ENCODE measurements at regions of chr13 and their contacts with region 1.

Region 1: DNA sequence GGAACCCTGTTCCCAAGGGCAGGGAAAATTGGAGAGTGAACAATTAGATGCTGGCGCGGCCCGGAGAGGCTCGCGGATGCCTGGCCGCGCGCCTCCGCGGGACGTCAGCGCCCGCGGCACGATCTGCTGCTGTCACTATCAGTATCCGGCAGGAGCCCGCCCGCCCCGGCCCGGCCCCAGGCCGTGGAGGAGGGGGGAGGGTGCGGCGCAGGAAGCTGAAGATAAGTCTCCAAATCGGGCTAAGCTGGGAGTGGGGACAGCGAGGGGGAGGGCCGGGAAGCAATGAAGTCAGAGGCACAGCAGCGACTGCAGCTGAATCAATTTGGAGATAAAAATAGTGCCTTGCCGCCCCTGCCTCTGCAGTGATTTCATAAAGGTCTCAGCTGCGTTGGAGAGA is 441.5 kb upstream of the KLF12 start:
- DNase-seq: peak; percentile 88 to 95
- ATAC-seq: peak; percentile 96 to 100 (median 99)
- H3K4me3 ChIP-seq: peak overlapping the region in 9 of 10 donors; percentile 21 to 51 (median 44)
- H3K27ac ChIP-seq: peak overlapping the region; percentile 13 to 86 (median 64)
- H3K4me1 ChIP-seq: peaks cover 0 to 36% (median 23%) of the 10 kb centered on the region in 9 donors
- H3K27me3 ChIP-seq: peaks cover 0 to 18% (median 0%) of the 10 kb centered on the region in 7 donors
- CTCF ChIP-seq: peak in 1 of 9 donors; percentile 8

Region 2: DNA sequence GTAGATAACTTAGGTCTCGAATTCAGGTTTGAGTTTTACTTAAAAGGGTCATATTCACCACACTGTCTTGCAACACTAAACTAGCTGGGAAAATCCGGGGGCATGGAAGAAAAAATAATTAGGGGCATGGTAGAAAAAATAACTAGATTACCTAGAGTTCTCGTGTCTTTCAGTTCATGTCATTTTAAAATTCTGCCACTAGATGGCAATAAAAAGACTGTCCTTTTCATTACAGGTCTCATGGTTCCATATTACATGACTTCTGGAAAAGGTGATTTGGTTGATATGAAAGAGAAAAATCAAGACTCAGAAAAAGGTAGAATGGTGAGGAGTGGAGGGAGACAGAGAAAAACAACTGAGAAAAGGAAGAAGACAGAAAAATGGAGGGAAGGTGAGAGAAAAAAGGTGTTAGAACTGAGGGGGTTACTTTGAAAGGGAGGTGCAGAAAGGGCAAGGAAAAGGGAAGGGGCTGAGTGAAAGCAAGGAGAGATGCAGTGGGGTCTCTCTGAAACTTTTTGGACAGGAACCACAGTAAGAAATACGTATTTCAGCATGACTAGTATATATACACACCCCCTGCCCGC is 740.5 kb before region 1 on chr13:
- intact Hi-C with region 1: loop called in 1 of 10 experiments (anchors 10 kb)
- DNase-seq: no peak
- ATAC-seq: peak in 5 of 8 donors; percentile 35 to 58 (median 50)
- H3K4me3 ChIP-seq: no peak overlapping the region
- H3K27ac ChIP-seq: no peak overlapping the region
- H3K4me1 ChIP-seq: peaks cover 0 to 30% (median 8%) of the 10 kb centered on the region in 9 donors
- H3K27me3 ChIP-seq: no peaks in the 10 kb centered on the region
- CTCF ChIP-seq: peak; percentile 51 to 83 (median 71)

Region 3: GRCh38 chr13:74056801-74057542 is 518.8 kb before region 1 on chr13:
- intact Hi-C with region 1: loop called in 1 of 10 experiments (anchors 10 kb)
- DNase-seq: peak; percentile 59 to 82
- ATAC-seq: peak; percentile 79 to 97 (median 92)
- H3K4me3 ChIP-seq: peak overlapping the region in 2 of 10 donors; percentile 6 to 10
- H3K27ac ChIP-seq: peak overlapping the region; percentile 52 to 88 (median 58)
- H3K4me1 ChIP-seq: peaks cover 7 to 59% (median 46%) of the 10 kb centered on the region in 9 donors
- H3K27me3 ChIP-seq: no peaks in the 10 kb centered on the region
- CTCF ChIP-seq: no peak

Region 4: DNA sequence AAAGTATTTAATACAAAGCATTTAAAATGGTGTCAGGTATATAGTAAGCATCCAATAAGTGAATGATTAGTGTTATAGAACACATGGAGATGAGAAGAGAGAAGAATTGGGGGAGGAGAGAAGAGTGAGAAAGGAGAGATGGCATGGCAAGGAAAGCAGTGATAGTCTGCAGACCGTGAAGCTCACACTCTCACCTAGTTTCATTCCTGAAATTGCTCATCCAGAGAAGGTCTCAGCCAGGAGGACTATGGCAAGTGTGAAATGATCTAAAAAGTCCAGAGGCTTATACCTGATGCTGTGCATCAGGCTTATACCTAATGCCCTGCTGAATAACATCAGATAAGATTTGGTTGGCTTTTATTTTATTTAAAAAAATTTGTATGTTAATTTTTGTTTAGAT is 90.0 kb before region 1 on chr13:
- intact Hi-C with region 1: no loop called
- DNase-seq: no peak
- ATAC-seq: no peak
- H3K4me3 ChIP-seq: no peak overlapping the region
- H3K27ac ChIP-seq: no peak overlapping the region
- H3K4me1 ChIP-seq: no peaks in the 10 kb centered on the region
- H3K27me3 ChIP-seq: no peaks in the 10 kb centered on the region
- CTCF ChIP-seq: no peak

Region 5: GRCh38 chr13:74726206-74726605 is 150.5 kb after region 1 on chr13:
- intact Hi-C with region 1: loop called in 3 of 10 experiments (anchors 5 to 10 kb)
- DNase-seq: no peak
- ATAC-seq: no peak
- H3K4me3 ChIP-seq: no peak overlapping the region
- H3K27ac ChIP-seq: no peak overlapping the region
- H3K4me1 ChIP-seq: peaks cover 0 to 10% (median 0%) of the 10 kb centered on the region in 9 donors
- H3K27me3 ChIP-seq: no peaks in the 10 kb centered on the region
- CTCF ChIP-seq: no peak

Region 6: GRCh38 chr13:74732736-74733385 is 157.1 kb after region 1 on chr13:
- intact Hi-C with region 1: loop called in 3 of 10 experiments (anchors 5 to 10 kb)
- DNase-seq: no peak
- ATAC-seq: no peak
- H3K4me3 ChIP-seq: no peak overlapping the region
- H3K27ac ChIP-seq: no peak overlapping the region
- H3K4me1 ChIP-seq: peaks cover 0 to 16% (median 0%) of the 10 kb centered on the region in 9 donors
- H3K27me3 ChIP-seq: no peaks in the 10 kb centered on the region
- CTCF ChIP-seq: no peak